Ascending aorta (tissue), 2 donors: ENCODE measurements at regions of chr6 and their contacts with region 1.

Region 1: DNA sequence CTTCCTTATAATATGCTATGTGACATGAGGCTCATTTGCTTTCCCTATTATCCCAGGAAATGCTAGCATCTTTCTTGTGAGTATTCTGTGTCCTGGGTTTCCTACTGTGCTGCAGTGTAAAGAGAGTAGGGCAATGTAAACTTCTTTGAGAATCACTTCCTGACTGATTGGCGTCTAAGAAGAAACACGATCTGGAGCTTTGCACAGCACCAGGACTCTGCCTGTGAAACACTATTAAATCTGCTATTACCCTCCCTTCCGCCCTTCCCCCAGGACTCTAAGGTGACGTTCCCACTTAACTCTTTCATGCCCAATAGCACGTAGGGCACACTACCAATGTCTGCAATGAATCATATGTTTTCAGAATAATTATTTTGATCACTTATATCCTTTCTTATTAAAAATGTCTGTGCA is 607.3 kb upstream of the CITED2 start:
- DNase-seq: no peak
- H3K4me3 ChIP-seq: no peak overlapping the region
- H3K27ac ChIP-seq: peak overlapping the region; percentile 28 to 74
- H3K4me1 ChIP-seq: peaks cover 0 to 22% of the 10 kb centered on the region in 2 donors
- H3K27me3 ChIP-seq: no peaks in the 10 kb centered on the region
- CTCF ChIP-seq: no peak

Region 2: GRCh38 chr6:139597771-139598755 is 383.7 kb before region 1 on chr6:
- intact Hi-C with region 1: loop called (anchors 5 kb)
- DNase-seq: peak; percentile 53 to 94
- H3K4me3 ChIP-seq: no peak overlapping the region
- H3K27ac ChIP-seq: peak overlapping the region; percentile 75 to 89
- H3K4me1 ChIP-seq: peaks cover 7 to 41% of the 10 kb centered on the region in 2 donors
- H3K27me3 ChIP-seq: no peaks in the 10 kb centered on the region
- CTCF ChIP-seq: no peak

Region 3: GRCh38 chr6:139881728-139882211 is 100.0 kb before region 1 on chr6:
- intact Hi-C with region 1: loop called (anchors 5 kb)
- DNase-seq: no peak
- H3K4me3 ChIP-seq: peak overlapping the region; percentile 1 to 32
- H3K27ac ChIP-seq: peak overlapping the region in 1 of 2 donors; percentile 69
- H3K4me1 ChIP-seq: peaks cover 4 to 16% of the 10 kb centered on the region in 2 donors
- H3K27me3 ChIP-seq: no peaks in the 10 kb centered on the region
- CTCF ChIP-seq: peak; percentile 43 to 54 (median 45)